ENCODE measurements at regions of chr16 and their contacts with region 1.

Region 1: DNA sequence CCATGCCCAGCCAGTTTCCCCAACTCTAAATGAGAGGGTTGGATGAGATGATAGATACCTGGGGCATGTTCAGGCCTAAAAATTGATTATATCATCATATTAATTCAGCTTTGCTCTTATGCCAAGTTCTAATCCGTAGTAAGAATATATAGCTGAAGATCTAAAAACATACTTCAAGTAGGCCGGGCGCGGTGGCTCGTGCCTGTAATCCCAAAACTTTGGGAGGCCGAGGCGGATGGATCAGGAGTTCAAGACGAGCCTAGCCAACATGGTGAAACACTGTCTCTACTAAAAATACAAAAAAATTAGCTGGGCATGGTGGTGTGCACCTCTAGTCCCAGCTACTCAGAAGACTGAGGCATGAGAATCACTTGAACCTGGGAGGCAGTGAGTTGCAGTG is 12.0 kb downstream of the PLA2G10 start:
- DNase-seq: no peak
- ATAC-seq: no peak
- H3K4me3 ChIP-seq: no peak overlapping the region
- H3K27ac ChIP-seq: no peak overlapping the region
- H3K4me1 ChIP-seq: peaks cover 2% of the 10 kb centered on the region; the same call in 1 of the 2 replicates
- H3K27me3 ChIP-seq: no peaks in the 10 kb centered on the region
- CTCF ChIP-seq: no peak
- POLR2A ChIP-seq: no peak
- RAD21 ChIP-seq: no peak

Region 2: GRCh38 chr16:14325502-14326401 is 356.4 kb before region 1 on chr16:
- CTCF ChIA-PET with region 1: no interaction called
- POLR2A ChIA-PET with region 1: no interaction called
- dilution Hi-C with region 1: no loop called
- in situ Hi-C with region 1: no loop called
- intact Hi-C with region 1: no loop called
- DNase-seq: no peak
- ATAC-seq: no peak
- H3K4me3 ChIP-seq: no peak overlapping the region
- H3K27ac ChIP-seq: no peak overlapping the region
- H3K4me1 ChIP-seq: peaks cover 4% of the 10 kb centered on the region; the same call in 1 of the 2 replicates
- H3K27me3 ChIP-seq: no peaks in the 10 kb centered on the region
- CTCF ChIP-seq: no peak
- POLR2A ChIP-seq: no peak
- RAD21 ChIP-seq: no peak

Region 3: GRCh38 chr16:14641926-14642325 is 40.2 kb before region 1 on chr16:
- CTCF ChIA-PET with region 1: interaction called, 11 read pairs
- POLR2A ChIA-PET with region 1: no interaction called
- dilution Hi-C with region 1: no loop called
- in situ Hi-C with region 1: no loop called
- intact Hi-C with region 1: no loop called
- DNase-seq: no peak
- ATAC-seq: no peak
- H3K4me3 ChIP-seq: no peak overlapping the region
- H3K27ac ChIP-seq: no peak overlapping the region
- H3K4me1 ChIP-seq: no peaks in the 10 kb centered on the region
- H3K27me3 ChIP-seq: no peaks in the 10 kb centered on the region
- CTCF ChIP-seq: no peak
- POLR2A ChIP-seq: no peak
- RAD21 ChIP-seq: no peak